ENCODE measurements at regions of chr22 and their contacts with region 1.

Region 1: GRCh38 chr22:43014869-43015676 is at the start of gene PACSIN2:
- DNase-seq: peak; percentile 99
- ATAC-seq: peak; percentile 99
- H3K4me3 Mint-ChIP-seq: peak within 1 kb of the TSS; percentile 91
- H3K27ac Mint-ChIP-seq: peak within 1 kb of the TSS; percentile 80
- H3K4me1 Mint-ChIP-seq: peaks cover 20% of the 10 kb centered on the region
- H3K27me3 Mint-ChIP-seq: peaks cover 3% of the 10 kb centered on the region
- total RNA-seq, gene PACSIN2: 27.5 to 30.8 TPM

Region 2: DNA sequence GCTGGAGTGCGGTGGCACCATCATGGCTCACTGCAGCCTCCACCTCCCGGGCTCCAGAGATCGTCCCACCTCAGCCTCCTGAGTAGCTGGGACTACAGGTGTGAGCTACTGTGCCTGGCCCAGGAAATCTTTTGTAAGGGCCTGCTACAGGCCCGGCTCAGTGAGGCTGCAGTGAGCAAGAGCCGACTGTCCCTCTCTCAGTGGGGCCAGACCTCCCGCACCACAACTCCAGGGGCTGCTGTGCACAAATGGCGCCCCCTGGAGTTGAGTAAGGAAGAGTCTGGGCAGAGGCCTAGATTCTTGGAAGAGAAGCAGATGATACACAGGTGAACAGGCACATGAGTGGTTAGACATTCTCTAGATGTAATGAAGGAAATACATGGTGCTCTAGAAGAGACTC is 454.3 kb before region 1 on chr22:
- CTCF ChIA-PET with region 1: no interaction called
- POLR2A ChIA-PET with region 1: no interaction called
- DNase-seq: peak; percentile 45
- ATAC-seq: peak; percentile 56
- H3K4me3 Mint-ChIP-seq: no peak overlapping the region
- H3K27ac Mint-ChIP-seq: no peak overlapping the region
- H3K4me1 Mint-ChIP-seq: peaks cover 11% of the 10 kb centered on the region
- H3K27me3 Mint-ChIP-seq: no peaks in the 10 kb centered on the region

Region 3: DNA sequence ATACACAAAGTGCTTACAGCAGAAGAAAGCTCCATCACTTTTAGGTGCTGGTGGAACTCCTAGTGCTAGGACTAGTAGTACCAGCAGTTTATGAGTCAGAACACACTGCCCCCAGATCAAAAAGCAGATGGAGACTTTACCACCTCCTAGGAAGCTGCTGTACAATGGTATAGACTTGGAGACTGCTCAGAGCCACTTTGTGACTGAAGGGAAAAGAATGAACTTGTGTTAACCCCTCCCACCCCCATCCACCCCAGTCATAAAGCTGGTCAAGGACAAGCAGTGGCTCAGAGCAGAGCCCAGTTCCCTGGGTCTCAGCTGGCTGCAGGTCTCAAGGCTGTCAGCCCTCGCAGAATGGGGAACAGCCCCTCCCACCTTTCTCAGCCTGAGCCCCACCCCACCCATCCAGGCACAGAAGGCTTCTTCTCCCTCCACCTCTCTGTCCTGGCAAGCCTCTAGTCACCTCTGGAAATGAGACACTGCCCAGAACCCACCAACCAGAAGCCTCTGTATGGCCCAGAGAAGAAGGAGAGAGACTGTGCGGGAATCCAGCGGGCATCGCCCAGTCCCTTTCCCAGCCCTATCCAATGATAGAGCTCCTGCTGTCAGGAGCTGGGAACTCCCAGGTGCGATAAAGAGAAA is 23.9 kb before region 1 on chr22:
- CTCF ChIA-PET with region 1: no interaction called
- POLR2A ChIA-PET with region 1: no interaction called
- DNase-seq: no peak
- ATAC-seq: no peak
- H3K4me3 Mint-ChIP-seq: no peak overlapping the region
- H3K27ac Mint-ChIP-seq: no peak overlapping the region
- H3K4me1 Mint-ChIP-seq: no peaks in the 10 kb centered on the region
- H3K27me3 Mint-ChIP-seq: no peaks in the 10 kb centered on the region

Region 4: DNA sequence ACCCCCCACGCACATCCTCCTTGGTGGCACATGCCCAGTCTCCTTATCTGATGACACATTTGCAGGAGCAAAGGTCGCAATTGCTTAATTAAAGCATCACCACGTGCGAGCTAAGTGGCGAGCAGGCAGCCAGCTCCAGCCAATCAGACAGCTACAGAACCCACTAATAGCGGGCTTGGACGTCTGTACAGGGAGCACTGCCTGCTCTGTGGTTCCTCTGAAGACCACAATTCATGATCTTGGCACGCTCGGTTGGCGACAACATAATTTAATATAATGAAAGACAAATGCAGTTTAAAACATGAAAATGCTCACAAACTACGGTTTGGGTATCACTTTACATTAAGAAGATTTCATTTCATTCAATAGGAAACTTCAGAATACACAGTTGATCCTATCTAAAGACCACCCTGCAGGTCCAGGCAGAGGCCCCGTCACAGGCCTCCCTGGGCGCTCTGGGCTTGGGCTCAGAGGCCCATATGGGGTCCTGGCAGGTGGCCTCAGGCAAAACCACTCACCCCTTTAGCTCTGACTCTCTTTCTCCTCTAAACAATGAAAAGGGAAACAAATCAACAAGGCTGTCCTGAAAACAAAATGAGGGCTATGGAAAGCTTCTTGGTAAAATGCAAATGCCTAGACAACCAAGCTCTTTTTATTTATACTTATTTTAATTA is 10.6 kb before region 1 on chr22:
- CTCF ChIA-PET with region 1: interaction called, 5 read pairs
- POLR2A ChIA-PET with region 1: interaction called, 12 read pairs
- DNase-seq: no peak
- ATAC-seq: no peak
- H3K4me3 Mint-ChIP-seq: no peak overlapping the region
- H3K27ac Mint-ChIP-seq: peak overlapping the region; percentile 14
- H3K4me1 Mint-ChIP-seq: peaks cover 65% of the 10 kb centered on the region
- H3K27me3 Mint-ChIP-seq: no peaks in the 10 kb centered on the region

Measured in activated CD8-positive, alpha-beta T cell treated with anti-CD3 and anti-CD28 coated beads, Interleukin-2, amount 10 ng/mL, durations not matched to agents 7 days and 5 days (primary cell).